ENCODE measurements at regions of chr6 and their contacts with region 1.

Region 1: GRCh38 chr6:31366693-31367470 is 9.9 kb upstream of the HLA-B start:
- DNase-seq: peak; percentile 35
- H3K4me3 ChIP-seq: peak overlapping the region; percentile 17; the same call in 1 of the 2 replicates
- H3K27me3 ChIP-seq: peaks cover 17% of the 10 kb centered on the region
- CTCF ChIP-seq: peak; percentile 96

Region 2: GRCh38 chr6:30926644-30927043 is 440.2 kb before region 1 on chr6:
- CTCF ChIA-PET with region 1: no interaction called
- POLR2A ChIA-PET with region 1: no interaction called
- DNase-seq: no peak
- H3K4me3 ChIP-seq: no peak overlapping the region
- H3K27me3 ChIP-seq: no peaks in the 10 kb centered on the region
- CTCF ChIP-seq: no peak

Region 3: GRCh38 chr6:31143148-31143547 is 223.7 kb before region 1 on chr6:
- CTCF ChIA-PET with region 1: interaction called, 11 read pairs
- POLR2A ChIA-PET with region 1: no interaction called
- DNase-seq: no peak
- H3K4me3 ChIP-seq: no peak overlapping the region
- H3K27me3 ChIP-seq: no peaks in the 10 kb centered on the region
- CTCF ChIP-seq: no peak

Region 4: GRCh38 chr6:31197559-31198305 is 169.2 kb before region 1 on chr6:
- CTCF ChIA-PET with region 1: interaction called, 201 read pairs
- POLR2A ChIA-PET with region 1: no interaction called
- DNase-seq: peak; percentile 30
- H3K4me3 ChIP-seq: peak overlapping the region; percentile 57
- H3K27me3 ChIP-seq: no peaks in the 10 kb centered on the region
- CTCF ChIP-seq: no peak

Region 5: DNA sequence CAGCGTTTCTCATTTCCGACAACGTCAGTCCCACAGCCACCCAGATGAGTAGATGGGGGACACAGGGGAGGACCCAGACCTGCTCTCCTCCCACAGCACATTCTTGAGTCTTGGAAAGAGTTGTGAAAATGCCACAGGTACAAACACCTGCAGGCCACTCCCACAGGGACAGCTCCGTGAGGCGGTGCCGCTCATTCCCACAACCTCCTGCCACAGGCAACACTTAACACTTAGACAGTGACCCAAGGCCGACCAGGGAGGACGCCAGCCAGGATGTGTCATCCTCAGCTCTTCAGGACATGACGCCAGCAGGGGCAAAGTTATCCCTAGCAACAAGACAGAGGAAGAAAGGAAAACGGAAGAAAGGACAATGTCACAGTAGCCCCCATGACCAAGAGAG is 13.0 kb after region 1 on chr6:
- CTCF ChIA-PET with region 1: interaction called, 28 read pairs
- POLR2A ChIA-PET with region 1: no interaction called
- DNase-seq: no peak
- H3K4me3 ChIP-seq: no peak overlapping the region
- H3K27me3 ChIP-seq: peaks cover 9% of the 10 kb centered on the region
- CTCF ChIP-seq: no peak